Activated T-helper 1 cell treated with anti-CD3 and anti-CD28 coated beads, Interleukin-12 subunit alpha, Interleukin-12 subunit beta, Interleukin-2, Interleukin-4 antibody, amounts not matched to agents 30 ng/mL and 10 ng/mL and 1 ng/mL, durations not matched to agents 14 hours and 24 hours and 36 hours (primary cell): ENCODE measurements at regions of chr9 and their contacts with region 1.

Region 1: GRCh38 chr9:132354637-132355355 is at the start of gene SETX:
- DNase-seq: peak; percentile 91
- H3K4me3 Mint-ChIP-seq: peak within 1 kb of the TSS; percentile 91
- H3K27ac Mint-ChIP-seq: peak within 1 kb of the TSS; percentile 95
- H3K4me1 Mint-ChIP-seq: peaks cover 46% of the 10 kb centered on the region
- H3K27me3 Mint-ChIP-seq: peaks cover 3% of the 10 kb centered on the region
- total RNA-seq, gene SETX: 47.4 and 49.6 TPM in 2 replicates

Region 2: DNA sequence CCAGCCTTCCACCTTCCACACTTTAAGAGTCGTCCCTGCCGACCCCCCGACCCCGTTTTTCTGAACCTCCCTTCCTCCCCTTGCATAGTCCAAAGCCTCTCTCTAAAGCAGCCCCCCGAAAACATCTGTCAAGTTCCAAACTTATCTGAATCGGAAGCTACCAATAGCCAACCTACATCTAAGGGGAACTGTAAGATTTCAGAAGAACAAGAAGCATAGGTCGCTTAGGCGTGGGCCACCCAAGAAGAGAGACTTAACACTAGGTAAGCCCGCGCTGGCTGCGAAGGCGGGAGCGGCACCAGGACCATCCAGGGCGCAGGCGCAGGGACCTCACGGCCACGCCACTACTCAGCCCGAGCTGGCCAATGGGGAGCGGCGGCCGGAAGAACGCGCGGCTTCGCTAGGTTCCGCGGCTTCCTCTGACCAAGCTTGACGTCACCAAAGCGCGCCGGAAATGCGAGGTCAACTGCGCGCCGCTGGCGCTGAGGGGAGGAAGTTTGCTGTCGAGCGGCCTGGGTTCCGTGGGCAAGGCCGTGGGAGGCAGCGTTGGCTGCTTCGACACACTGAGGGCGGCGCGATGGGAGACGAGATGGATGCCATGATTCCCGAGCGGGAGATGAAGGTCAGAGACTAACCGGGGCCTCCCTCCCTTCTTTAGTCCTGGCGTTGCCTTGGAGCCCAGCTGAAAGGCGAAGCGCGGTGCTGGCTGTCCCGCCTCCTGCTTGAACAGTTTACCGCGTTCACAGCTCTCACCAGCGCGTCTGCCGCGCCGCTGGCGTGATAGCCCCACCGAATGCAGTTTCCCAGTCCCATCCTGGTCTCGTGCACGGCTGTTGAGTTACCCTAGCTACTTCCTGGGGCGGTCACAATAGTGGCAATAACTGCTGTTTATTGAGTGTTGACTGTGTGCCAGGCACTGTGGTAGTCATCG is 1229.4 kb before region 1 on chr9 and contains the start of gene NUP214:
- intact Hi-C with region 1: loop called (anchors 2 kb)
- DNase-seq: peak; percentile 99
- H3K4me3 Mint-ChIP-seq: peak within 1 kb of the TSS; percentile 91
- H3K27ac Mint-ChIP-seq: peak within 1 kb of the TSS; percentile 91
- H3K4me1 Mint-ChIP-seq: peaks cover 30% of the 10 kb centered on the region
- H3K27me3 Mint-ChIP-seq: no peaks in the 10 kb centered on the region
- total RNA-seq, gene NUP214: 77.7 and 80.7 TPM in 2 replicates

Region 3: DNA sequence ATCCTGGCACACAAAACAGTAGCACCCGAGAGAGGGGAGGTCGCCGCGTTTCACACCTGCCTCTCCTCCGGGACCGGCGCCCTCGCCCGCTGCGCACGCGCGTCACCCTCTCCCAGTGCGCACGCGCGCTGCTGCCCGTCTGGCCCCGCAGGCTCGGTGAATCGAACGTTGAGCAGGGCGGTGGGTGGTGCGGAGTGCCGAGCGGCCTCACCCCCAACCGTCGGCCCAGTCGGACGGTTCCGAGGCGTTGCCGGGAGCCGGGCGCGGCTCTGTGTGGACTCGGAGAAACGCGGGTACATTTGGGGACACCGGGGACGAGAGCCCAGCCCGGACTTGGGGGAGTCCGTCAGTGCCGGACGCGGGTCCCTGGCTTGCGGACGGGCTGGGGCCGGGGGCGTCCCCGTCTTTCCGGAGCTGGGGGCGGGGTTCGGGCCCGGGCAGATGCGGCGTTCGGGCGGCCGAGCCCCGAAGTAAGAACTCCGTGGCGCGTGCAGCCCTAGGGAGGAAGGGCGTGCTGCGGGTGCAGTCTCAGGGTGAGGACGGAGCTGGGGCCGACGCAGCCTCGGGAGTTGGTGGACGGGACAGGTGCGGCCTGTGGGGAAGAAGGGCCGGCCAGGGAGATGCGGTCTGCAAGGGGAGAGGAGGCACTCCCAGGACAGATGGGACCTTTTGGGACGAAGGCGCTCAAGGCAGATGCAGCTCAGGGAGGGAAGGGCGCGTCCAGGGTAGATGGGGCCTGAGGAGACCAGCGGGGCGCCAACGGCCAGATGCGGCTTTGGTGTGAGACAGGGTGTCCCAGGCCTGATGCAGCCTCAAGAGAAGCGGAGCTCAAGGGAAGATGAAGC is 851.8 kb before region 1 on chr9 and contains the start of gene POMT1:
- intact Hi-C with region 1: loop called (anchors 5 kb)
- DNase-seq: peak; percentile 90
- H3K4me3 Mint-ChIP-seq: peak within 1 kb of the TSS; percentile 93
- H3K27ac Mint-ChIP-seq: peak within 1 kb of the TSS; percentile 90
- H3K4me1 Mint-ChIP-seq: peaks cover 48% of the 10 kb centered on the region
- H3K27me3 Mint-ChIP-seq: no peaks in the 10 kb centered on the region
- total RNA-seq, gene POMT1: 39.1 and 39.3 TPM in 2 replicates

Region 4: GRCh38 chr9:132144708-132145365 is 210.0 kb before region 1 on chr9:
- intact Hi-C with region 1: loop called (anchors 2 kb)
- DNase-seq: peak; percentile 28
- H3K4me3 Mint-ChIP-seq: peak overlapping the region; percentile 19
- H3K27ac Mint-ChIP-seq: peak overlapping the region; percentile 78
- H3K4me1 Mint-ChIP-seq: peaks cover 38% of the 10 kb centered on the region
- H3K27me3 Mint-ChIP-seq: peaks cover 53% of the 10 kb centered on the region

Region 5: DNA sequence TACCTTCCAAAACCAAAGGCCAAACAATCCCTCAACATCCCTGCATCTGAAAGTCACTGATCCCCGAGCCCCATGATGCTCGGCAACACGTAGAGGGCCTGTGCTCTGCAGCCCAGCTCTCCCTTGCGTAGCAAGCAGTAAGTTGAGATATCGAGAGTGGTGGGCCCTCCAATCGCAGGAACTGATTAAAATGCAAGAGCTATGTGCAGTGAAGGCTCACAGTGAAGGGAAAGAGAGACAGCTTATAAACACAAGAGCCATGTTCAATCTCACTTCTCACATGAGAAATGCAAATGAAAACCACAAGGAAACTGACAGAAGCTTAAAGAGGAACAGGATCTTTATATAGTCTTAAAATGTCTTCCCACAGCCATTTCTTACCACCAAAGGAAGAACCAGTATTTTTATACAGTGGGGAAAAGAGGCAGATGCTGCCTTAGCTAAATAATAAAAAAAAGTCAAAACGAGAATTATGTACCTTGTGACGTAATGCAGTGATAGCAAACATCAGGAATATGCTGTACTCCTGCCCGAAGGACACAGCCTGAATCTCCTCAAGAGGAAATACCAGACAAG is 27.3 kb after region 1 on chr9:
- intact Hi-C with region 1: no loop called
- DNase-seq: no peak
- H3K4me3 Mint-ChIP-seq: no peak overlapping the region
- H3K27ac Mint-ChIP-seq: no peak overlapping the region
- H3K4me1 Mint-ChIP-seq: peaks cover 35% of the 10 kb centered on the region
- H3K27me3 Mint-ChIP-seq: no peaks in the 10 kb centered on the region

Region 6: DNA sequence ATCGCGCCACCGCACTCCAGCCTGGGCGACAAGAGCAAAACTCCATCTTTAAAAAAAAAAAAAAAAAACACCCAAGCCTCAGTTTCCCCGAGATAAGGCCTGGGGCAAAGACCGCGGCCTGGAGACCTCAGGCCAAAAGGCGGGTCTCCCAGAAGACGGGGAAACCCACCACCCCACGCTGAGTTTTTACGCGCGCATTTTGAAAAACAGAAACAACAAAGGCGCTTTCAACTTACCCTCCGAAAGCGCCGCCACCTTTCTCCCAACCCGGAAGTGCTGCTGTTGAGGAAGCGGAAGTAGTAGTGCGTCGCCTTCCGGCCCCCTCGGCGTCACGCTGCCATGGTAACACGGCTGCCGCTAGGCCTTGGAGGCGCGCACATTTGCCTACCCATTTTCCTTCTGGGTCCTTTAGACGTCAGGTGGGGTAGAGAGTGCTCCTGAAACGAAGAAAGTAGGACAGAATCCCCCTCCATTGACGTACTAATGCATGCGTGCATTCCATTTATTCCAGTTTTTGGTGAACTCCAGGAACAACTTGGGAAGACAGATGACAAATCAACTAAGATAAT is 51.8 kb after region 1 on chr9 and contains the start of gene TTF1:
- intact Hi-C with region 1: loop called (anchors 1 kb)
- DNase-seq: peak; percentile 91
- H3K4me3 Mint-ChIP-seq: peak within 1 kb of the TSS; percentile 87
- H3K27ac Mint-ChIP-seq: peak within 1 kb of the TSS; percentile 91
- H3K4me1 Mint-ChIP-seq: peaks cover 52% of the 10 kb centered on the region
- H3K27me3 Mint-ChIP-seq: peaks cover 16% of the 10 kb centered on the region
- total RNA-seq, gene TTF1: 33.1 and 33.3 TPM in 2 replicates

Region 7: DNA sequence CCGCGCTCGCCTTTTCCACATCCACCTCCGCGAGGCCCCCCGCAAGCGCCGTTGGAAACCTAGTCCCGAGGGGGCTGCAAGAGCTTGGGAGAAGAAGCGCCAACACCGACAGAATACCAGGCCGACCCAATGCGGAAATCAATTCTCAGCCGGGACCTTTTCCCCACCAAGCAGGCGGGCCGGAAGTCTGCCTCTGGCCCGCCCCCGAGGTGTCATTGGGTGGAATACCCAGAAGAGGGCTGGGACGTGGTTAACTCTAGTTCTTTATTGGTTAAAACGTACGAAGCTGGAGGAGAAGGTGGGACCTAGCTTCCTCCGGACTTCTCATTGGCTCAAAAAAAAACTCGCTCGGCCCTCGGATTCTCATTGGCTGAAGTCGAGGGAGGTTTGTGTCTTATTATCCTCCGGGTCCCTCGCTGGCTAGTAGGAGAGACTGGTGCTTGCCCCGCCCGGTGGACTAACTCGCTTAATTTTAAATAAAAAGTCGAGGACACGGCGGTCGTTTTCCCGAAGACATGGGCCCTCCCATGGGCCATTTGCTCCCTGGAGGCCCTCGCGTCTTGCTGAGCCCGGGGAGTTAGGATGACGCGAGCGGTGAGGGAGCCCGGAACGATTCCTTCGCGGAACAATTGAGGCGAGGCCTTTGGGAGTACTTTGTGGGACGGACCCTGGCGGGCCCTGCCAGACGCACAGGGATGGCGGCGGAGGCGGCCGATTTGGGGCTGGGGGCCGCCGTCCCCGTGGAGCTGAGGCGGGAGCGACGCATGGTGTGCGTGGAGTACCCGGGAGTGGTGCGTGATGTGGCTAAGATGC is 675.7 kb after region 1 on chr9 and contains the start of gene GTF3C5:
- intact Hi-C with region 1: loop called (anchors 1 kb)
- DNase-seq: peak; percentile 91
- H3K4me3 Mint-ChIP-seq: peak within 1 kb of the TSS; percentile 96
- H3K27ac Mint-ChIP-seq: peak within 1 kb of the TSS; percentile 97
- H3K4me1 Mint-ChIP-seq: peaks cover 47% of the 10 kb centered on the region
- H3K27me3 Mint-ChIP-seq: no peaks in the 10 kb centered on the region
- total RNA-seq, gene GTF3C5: 87.8 and 89.0 TPM in 2 replicates